Ascending aorta (tissue), 2 donors: ENCODE measurements at regions of chr14 and their contacts with region 1.

Region 1: GRCh38 chr14:88868558-88869159 is 44.2 kb downstream of the TTC8 start:
- DNase-seq: no peak
- H3K4me3 ChIP-seq: no peak overlapping the region
- H3K27ac ChIP-seq: no peak overlapping the region
- H3K4me1 ChIP-seq: no peaks in the 10 kb centered on the region
- H3K27me3 ChIP-seq: no peaks in the 10 kb centered on the region
- CTCF ChIP-seq: peak in 2 of 3 experiments; percentile 34 to 62

Region 2: GRCh38 chr14:88667555-88668273 is 200.9 kb before region 1 on chr14:
- intact Hi-C with region 1: loop called (anchors 1 kb)
- DNase-seq: peak in 1 of 2 donors; percentile 67
- H3K4me3 ChIP-seq: no peak overlapping the region
- H3K27ac ChIP-seq: peak overlapping the region; percentile 1 to 5
- H3K4me1 ChIP-seq: no peaks in the 10 kb centered on the region
- H3K27me3 ChIP-seq: no peaks in the 10 kb centered on the region
- CTCF ChIP-seq: peak; percentile 56 to 82 (median 78)

Region 3: DNA sequence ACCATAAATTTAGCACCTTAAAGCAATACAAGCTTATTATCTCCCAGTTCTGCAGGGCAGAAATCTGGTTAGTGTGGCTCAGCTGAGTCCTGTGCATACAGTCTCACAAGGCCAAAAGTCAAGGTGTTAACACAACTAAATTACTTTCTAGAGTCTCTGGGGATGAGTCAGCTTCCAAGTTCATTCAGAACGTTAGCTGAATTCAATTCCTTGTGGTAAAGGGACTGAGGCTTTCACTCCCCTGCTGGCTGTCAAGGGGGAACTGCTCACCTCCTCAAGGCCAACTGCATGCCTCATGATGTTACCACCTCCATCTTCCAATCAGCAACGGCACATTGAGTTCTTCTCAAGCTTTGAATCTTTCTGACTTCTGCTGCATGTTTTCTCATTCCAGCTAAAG is 103.5 kb before region 1 on chr14:
- intact Hi-C with region 1: no loop called
- DNase-seq: no peak
- H3K4me3 ChIP-seq: no peak overlapping the region
- H3K27ac ChIP-seq: no peak overlapping the region
- H3K4me1 ChIP-seq: no peaks in the 10 kb centered on the region
- H3K27me3 ChIP-seq: no peaks in the 10 kb centered on the region
- CTCF ChIP-seq: no peak

Region 4: GRCh38 chr14:88792572-88793258 is 75.9 kb before region 1 on chr14 and contains the start of gene EML5:
- intact Hi-C with region 1: loop called (anchors 5 kb)
- DNase-seq: peak; percentile 23 to 90
- H3K4me3 ChIP-seq: peak within 1 kb of the TSS; percentile 71 to 94
- H3K27ac ChIP-seq: peak within 1 kb of the TSS in 1 of 2 donors; percentile 81
- H3K4me1 ChIP-seq: peaks cover 3 to 8% of the 10 kb centered on the region in 2 donors
- H3K27me3 ChIP-seq: no peaks in the 10 kb centered on the region
- CTCF ChIP-seq: peak; percentile 15 to 24 (median 21)
- total RNA-seq, gene EML5: 0.21 TPM